Sigmoid colon (tissue), 7 donors: ENCODE measurements at regions of chr2 and their contacts with region 1.

Region 1: GRCh38 chr2:11129598-11130449 is 25.4 kb upstream of the SLC66A3 start:
- DNase-seq: no peak
- H3K4me3 ChIP-seq: peak overlapping the region in 3 of 4 donors; percentile 28 to 43 (median 42)
- H3K27ac ChIP-seq: peak overlapping the region in 1 of 4 donors; percentile 37
- H3K4me1 ChIP-seq: peaks cover 0 to 26% (median 22%) of the 10 kb centered on the region in 4 donors
- H3K27me3 ChIP-seq: no peaks in the 10 kb centered on the region
- CTCF ChIP-seq: no peak
- EP300 ChIP-seq: no peak
- POLR2A ChIP-seq: no peak

Region 2: DNA sequence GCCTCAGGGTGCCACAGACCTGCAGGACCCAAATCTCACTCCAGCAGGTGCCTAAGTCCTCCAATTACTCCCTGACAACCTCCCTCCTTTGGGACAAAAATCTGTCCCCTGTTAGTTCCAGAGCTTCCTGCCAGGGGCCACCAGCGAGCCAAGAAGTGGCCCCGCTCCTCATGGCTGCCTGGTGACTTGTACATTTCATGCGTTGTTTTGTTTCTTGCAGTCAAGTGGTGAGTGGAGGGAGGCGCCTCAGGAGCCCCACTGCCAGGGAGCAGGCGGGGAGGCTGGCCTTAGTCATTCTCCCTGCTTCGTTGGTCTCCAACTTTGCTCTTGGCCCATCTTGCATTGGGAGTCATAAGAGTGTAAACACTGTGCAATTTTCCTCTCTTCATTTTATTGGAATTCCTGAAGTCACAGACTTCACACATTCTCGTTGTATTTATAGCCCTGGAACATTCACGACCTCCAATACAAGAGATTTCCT is 136.8 kb before region 1 on chr2:
- intact Hi-C with region 1: no loop called
- DNase-seq: peak; percentile 66
- H3K4me3 ChIP-seq: no peak overlapping the region
- H3K27ac ChIP-seq: peak overlapping the region in 2 of 4 donors; percentile 23 to 37
- H3K4me1 ChIP-seq: peaks cover 0 to 15% (median 14%) of the 10 kb centered on the region in 4 donors
- H3K27me3 ChIP-seq: no peaks in the 10 kb centered on the region
- CTCF ChIP-seq: no peak
- EP300 ChIP-seq: no peak
- POLR2A ChIP-seq: no peak

Region 3: DNA sequence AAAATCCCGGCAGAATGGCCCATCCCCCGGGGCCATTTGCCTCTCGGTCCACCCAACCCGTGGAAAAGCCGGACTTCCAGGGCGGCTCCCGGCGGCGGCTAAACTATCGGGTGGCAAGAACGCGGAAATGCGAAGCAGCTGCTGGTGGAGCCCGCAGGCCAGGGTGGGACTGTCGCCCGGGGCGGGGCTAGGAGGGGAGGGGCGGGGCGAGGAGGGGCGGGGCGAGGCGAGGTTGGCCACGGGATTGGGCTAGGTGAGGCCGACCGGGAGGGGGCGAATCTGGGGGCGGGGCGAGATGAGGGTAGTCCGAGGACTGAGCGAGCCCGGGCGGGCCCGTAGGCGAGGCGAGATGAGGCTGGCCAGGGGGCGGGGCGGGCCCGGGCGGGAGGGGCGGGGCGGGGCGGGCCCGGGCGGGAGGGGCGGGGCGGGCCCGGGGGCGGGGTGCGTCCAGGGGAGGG is 25.1 kb after region 1 on chr2:
- intact Hi-C with region 1: loop called (anchors 1 kb)
- DNase-seq: peak; percentile 99
- H3K4me3 ChIP-seq: peak overlapping the region; percentile 41 to 93 (median 66)
- H3K27ac ChIP-seq: peak overlapping the region; percentile 89 to 96 (median 94)
- H3K4me1 ChIP-seq: peaks cover 0 to 24% (median 19%) of the 10 kb centered on the region in 4 donors
- H3K27me3 ChIP-seq: no peaks in the 10 kb centered on the region
- CTCF ChIP-seq: no peak
- EP300 ChIP-seq: no peak
- POLR2A ChIP-seq: peak in 1 of 2 donors; percentile 46

Region 4: DNA sequence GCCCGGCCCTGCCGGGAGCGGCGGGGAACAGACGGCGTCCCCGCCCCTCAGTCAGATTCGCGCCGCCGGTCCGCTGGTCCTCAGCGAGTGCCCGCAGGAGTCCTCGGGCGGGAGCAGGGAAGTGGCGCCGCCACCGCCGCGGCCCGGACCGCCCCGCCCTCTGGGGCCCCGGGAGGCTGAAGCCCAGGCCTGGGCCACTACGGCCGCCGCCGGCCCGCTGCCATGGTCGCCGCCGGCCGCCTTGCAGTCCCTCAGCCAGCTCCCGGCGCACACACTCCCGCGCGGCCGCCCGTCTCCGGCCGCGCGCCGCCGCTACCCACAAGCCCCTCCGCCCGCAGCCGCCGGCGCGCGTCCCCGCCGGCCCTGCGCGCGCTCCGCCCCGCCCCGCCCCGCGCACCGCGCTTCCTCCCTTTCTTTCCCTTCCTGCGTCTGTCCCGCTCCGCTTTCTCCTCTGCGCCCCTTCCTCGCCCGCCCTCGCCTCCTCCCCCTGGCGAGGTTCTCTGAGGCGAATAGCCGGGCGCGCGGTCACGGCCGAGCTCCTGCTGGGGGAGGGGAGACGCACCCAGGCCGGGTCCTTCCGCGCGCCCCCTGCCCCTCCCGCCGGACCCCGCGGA is 214.6 kb after region 1 on chr2 and contains the start of gene ROCK2:
- intact Hi-C with region 1: loop called (anchors 5 kb)
- DNase-seq: peak; percentile 93
- H3K4me3 ChIP-seq: peak within 1 kb of the TSS; percentile 76 to 100 (median 93)
- H3K27ac ChIP-seq: peak within 1 kb of the TSS; percentile 98 to 100 (median 98)
- H3K4me1 ChIP-seq: peaks cover 0 to 41% (median 35%) of the 10 kb centered on the region in 4 donors
- H3K27me3 ChIP-seq: no peaks in the 10 kb centered on the region
- CTCF ChIP-seq: no peak
- EP300 ChIP-seq: no peak
- POLR2A ChIP-seq: no peak
- total RNA-seq, gene ROCK2: 43.5 to 74.8 (median 48.3) TPM

Region 5: DNA sequence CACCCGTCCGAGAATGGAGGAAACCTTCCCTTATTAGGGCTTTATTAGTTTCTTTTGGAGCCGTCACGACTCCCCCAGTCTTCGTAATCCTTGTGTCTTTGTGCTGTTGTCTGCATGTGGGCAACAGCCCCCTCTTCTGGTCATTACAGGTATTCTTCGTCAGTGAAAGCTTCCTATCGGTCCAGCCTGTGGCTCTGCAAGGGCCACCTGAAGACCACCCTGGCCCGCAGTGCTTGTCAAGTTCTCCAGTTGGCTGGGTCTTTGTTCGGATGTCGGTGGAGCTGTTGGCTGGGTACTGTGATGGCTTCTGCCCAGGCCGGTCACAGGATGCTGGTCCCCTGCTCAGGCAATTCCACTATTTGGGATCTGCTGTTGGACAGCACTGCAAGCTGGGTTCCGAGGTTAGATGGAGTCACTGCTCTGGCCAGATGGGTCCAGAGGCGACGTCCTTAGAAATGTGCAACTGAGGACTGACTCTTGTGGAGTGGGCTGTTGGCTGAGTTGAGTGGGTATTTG is 317.0 kb after region 1 on chr2:
- intact Hi-C with region 1: loop called (anchors 2 kb)
- DNase-seq: peak; percentile 63
- H3K4me3 ChIP-seq: no peak overlapping the region
- H3K27ac ChIP-seq: peak overlapping the region in 1 of 4 donors; percentile 3
- H3K4me1 ChIP-seq: no peaks in the 10 kb centered on the region
- H3K27me3 ChIP-seq: no peaks in the 10 kb centered on the region
- CTCF ChIP-seq: peak; percentile 42 to 73 (median 68)
- EP300 ChIP-seq: no peak
- POLR2A ChIP-seq: no peak